Endothelial cell of umbilical vein (primary cell): ENCODE measurements at regions of chr18 and their contacts with region 1.

Region 1: DNA sequence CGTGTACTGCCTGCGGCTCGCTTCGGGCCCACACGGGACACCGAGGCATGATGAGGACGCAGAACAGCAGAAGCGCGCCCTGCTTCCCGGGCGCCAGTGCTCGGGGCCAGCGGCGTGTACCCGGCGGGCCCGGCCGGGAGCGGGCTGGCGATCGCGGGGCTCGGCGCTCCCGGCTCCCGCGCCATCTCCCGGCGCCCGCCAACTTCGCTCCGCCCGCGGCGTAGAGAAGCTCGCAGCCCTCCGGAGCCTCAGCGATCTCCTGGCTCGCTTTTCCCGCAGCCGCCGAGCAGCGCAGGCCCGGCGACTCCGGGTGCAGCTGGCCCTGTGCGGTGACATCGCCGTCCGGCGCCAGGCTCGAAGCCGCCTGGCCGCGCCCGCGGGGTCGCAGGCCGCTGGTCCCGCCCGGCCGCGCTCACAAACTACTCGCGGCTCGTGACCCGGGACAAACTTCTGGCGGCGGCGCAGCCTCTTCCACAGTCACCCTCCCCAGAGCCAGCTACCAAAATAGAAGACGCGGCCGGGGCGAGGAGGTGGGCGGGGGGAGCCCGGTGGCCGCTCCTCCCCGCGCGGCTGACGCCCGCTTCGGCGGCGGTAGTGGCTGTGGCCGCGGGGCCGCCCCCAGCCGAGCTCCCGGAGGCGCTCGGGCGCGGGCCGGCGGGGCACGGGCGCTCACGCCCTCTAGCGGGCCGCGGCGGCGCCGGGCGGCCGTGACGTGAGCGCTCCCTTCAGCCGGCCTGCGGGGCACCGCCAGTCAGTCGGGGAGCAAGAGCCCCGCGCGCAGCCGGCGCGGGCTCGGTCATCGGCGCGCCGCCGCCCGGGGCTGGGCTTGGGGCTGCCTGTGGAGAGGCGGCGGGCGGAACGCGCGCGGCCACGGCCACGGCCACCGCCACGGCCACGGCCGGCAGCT is at the start of gene PTPRM:
- DNase-seq: peak; percentile 77
- H3K4me3 ChIP-seq: peak within 1 kb of the TSS; percentile 56 to 93 (median 68)
- H3K27ac ChIP-seq: peak within 1 kb of the TSS; percentile 74
- H3K4me1 ChIP-seq: peaks cover 20% of the 10 kb centered on the region
- H3K27me3 ChIP-seq: no peaks in the 10 kb centered on the region
- CTCF ChIP-seq: peak; percentile 28 to 41
- POLR2A ChIP-seq: peak; percentile 13
- total RNA-seq, gene PTPRM: 34.7 and 43.7 TPM in 2 replicates

Region 2: GRCh38 chr18:7221424-7222155 is 345.2 kb before region 1 on chr18:
- CTCF ChIA-PET with region 1: interaction called, 8 read pairs
- POLR2A ChIA-PET with region 1: no interaction called
- dilution Hi-C with region 1: no loop called
- intact Hi-C with region 1: loop called (anchors 1 kb)
- DNase-seq: peak; percentile 69
- H3K4me3 ChIP-seq: no peak overlapping the region
- H3K27ac ChIP-seq: no peak overlapping the region
- H3K4me1 ChIP-seq: no peaks in the 10 kb centered on the region
- H3K27me3 ChIP-seq: peaks cover 0 to 1% of the 10 kb centered on the region in 2 experiments
- CTCF ChIP-seq: peak; percentile 71 to 79
- POLR2A ChIP-seq: no peak

Region 3: DNA sequence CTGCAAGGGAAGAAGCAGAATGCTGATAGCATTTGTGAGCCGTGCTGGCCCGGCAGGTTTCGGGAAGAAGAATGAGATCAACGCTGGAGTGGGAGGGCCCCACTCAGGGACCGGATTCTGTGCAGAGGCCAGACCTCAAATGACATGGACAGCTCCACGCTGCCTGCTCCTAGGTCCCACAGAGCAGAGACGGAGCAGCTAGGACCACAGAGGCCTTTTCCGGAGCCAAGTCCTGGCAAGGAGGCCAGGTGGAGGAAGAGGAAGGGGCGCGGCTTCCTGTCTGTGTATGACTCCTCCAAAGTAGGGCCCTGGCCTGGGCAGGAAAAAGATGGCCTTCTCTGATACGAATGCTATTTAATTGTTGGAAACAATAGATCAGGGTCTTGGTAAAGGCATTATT is 196.0 kb before region 1 on chr18:
- CTCF ChIA-PET with region 1: interaction called, 55 read pairs
- POLR2A ChIA-PET with region 1: interaction called, 9 read pairs
- dilution Hi-C with region 1: no loop called
- intact Hi-C with region 1: loop called (anchors 1 kb)
- DNase-seq: peak; percentile 88
- H3K4me3 ChIP-seq: peak overlapping the region in 1 of 3 experiments; percentile 29
- H3K27ac ChIP-seq: peak overlapping the region; percentile 98
- H3K4me1 ChIP-seq: peaks cover 35% of the 10 kb centered on the region
- H3K27me3 ChIP-seq: peaks cover 0 to 2% of the 10 kb centered on the region in 2 experiments
- CTCF ChIP-seq: no peak
- POLR2A ChIP-seq: no peak

Region 4: DNA sequence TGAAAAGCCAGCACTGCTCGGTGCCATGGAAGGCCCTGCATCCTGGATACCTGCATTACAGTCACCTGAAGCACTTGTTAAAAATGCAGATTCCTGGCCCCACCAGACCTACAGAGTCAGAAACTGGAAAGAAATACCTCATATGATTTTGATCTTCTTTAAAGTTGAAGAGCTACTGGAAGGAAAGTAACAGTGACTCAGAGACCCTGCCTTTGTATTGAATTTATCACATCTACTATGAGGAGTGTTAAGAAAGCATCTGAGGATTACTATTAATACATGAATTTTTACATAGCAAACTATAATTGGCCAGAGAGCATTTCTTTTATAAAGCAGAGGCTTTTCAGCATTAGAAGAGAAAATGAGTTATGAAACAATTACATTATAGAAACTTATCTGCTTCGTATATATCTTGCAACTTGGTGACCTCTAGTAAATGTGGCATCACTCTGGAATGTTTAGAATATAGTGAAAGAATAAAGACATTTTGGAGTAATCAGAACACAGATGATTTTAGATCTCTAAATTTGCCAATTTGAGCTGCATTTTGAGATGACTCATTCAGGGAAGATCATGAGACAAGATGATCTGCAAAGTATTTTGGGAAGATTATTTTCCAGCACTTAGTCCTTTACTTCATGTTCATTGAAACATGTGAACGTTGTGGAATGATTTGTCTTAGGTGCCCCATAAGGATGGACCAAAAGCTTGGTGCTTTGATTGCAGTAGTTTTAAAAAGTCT is 12.5 kb after region 1 on chr18:
- CTCF ChIA-PET with region 1: interaction called, 17 read pairs
- POLR2A ChIA-PET with region 1: no interaction called
- dilution Hi-C with region 1: no loop called
- intact Hi-C with region 1: no loop called
- DNase-seq: no peak
- H3K4me3 ChIP-seq: no peak overlapping the region
- H3K27ac ChIP-seq: no peak overlapping the region
- H3K4me1 ChIP-seq: peaks cover 3% of the 10 kb centered on the region
- H3K27me3 ChIP-seq: no peaks in the 10 kb centered on the region
- CTCF ChIP-seq: no peak
- POLR2A ChIP-seq: no peak

Region 5: DNA sequence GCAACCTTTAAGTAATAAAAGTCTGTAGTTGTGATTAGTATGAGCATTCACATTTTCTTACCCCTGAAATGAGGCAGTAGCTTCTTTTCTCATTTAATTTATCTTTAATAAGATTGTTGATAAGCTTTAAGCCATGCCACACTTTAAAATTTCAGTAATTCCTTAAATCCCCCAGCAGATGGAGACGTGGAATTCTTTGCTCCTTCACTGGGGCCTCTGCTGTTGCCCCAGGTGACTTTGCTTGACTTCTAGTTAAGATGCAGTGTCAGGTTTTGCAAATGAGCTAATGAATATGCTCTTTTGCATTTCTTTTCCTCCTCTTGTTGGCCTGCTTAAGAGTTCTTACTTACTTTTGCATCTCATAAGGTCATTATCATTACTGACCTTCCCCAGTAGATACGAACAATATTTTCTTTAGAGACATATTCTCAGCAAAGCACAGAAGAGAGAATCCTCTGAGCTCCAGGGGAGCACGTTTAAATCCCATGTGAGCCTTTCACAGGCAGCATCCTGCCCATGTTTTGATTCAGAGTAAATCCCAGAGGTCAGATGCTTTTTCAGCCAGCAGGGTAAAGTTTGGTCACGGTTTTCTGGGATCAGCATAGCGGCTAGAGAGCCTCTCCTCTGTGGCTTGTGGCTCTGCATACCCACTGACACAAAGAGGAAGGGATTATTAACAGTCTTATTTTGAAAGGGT is 223.2 kb after region 1 on chr18:
- CTCF ChIA-PET with region 1: interaction called, 7 read pairs
- POLR2A ChIA-PET with region 1: no interaction called
- dilution Hi-C with region 1: no loop called
- intact Hi-C with region 1: loop called (anchors 1 kb)
- DNase-seq: peak; percentile 59
- H3K4me3 ChIP-seq: no peak overlapping the region
- H3K27ac ChIP-seq: no peak overlapping the region
- H3K4me1 ChIP-seq: no peaks in the 10 kb centered on the region
- H3K27me3 ChIP-seq: no peaks in the 10 kb centered on the region
- CTCF ChIP-seq: peak; percentile 31 to 43
- POLR2A ChIP-seq: no peak